ENCODE measurements at regions of chr10 and their contacts with region 1.

Region 1: DNA sequence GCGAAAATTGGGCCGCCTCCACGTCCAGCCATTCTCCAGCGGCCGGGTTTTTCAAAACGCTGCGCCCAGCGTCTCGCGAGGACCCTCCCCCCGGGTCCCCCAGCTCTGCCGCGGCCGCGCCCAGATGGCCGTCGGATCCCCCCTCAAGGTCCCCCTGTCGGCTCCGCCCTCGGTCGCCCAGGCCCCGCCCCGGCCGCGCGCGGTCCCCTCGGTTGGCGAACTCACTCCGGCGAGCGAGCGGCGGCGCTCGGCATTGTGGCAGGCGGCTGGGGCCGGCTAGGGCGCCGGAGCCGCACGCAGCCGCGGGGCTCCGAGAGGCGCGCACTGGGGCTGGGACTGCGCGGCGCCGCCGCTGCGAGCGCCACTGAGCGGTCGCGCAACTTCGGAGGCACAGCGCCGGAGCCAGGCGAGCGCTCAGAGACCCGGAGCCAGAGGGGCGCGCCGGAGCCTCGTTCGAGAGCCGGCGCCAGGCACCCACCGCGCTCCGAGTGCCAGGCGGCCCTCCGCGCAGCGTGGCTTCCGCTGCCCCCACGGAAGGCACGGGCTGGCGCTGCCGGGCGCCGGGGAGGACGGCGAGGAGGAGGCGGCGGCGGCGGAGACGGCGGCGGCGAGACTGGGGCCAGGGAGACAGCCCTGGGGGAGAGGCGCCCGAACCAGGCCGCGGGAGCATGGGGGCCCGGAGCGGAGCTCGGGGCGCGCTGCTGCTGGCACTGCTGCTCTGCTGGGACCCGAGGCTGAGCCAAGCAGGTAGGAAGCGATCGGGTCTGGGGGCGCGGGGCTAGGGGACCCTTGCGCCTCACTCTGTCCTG is at the start of gene UNC5B:
- DNase-seq: peak; percentile 71 to 92
- H3K4me3 ChIP-seq: peak within 1 kb of the TSS; percentile 95
- H3K27ac ChIP-seq: no peak within 1 kb of the TSS
- H3K4me1 ChIP-seq: peaks cover 24% of the 10 kb centered on the region
- H3K27me3 ChIP-seq: peaks cover 28% of the 10 kb centered on the region
- CTCF ChIP-seq: no peak
- total RNA-seq, gene UNC5B: 1.7 and 2.7 TPM in 2 replicates

Region 2: DNA sequence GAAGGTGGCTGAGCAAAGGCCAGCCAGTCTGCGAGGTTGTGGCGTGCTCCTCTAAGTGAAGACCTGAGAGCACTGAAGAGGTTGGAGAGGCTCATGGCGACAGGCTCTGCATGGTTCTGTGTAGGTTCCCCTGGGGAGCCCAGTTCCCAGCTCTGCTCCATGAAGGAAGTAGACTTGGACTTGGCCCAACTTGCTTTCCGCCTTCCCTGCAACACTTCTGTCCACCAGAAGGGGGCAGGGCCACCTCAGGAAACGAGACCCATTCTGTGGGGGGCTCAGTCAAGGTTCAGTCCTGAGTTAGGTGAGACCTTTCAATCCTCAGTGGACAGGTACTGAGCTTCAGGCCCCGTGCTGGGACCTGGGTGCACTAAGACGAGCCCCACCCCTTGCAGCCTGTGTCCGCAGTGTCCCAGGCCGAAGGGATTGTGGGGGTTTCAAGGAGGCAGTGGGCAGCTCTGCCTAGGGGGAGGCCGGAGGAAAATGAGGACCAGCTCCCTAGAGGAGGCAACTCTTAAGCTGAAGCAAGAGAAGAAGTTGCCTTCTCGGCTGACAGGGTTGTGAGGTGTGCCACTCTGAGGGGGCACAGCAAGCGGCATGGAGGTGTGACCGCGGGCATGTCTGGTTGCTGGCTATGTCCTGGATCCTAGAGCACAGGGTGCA is 309.1 kb before region 1 on chr10:
- CTCF ChIA-PET with region 1: interaction called, 4 read pairs
- POLR2A ChIA-PET with region 1: interaction called, 3 read pairs
- intact Hi-C with region 1: loop called (anchors 5 kb)
- DNase-seq: peak in 1 of 2 experiments; percentile 55
- H3K4me3 ChIP-seq: no peak overlapping the region
- H3K27ac ChIP-seq: no peak overlapping the region
- H3K4me1 ChIP-seq: 0 out of 2 replicates have a peak, but pooled peaks cover 5% of the 10 kb centered on the region
- H3K27me3 ChIP-seq: peaks cover 28% of the 10 kb centered on the region; the same call in 1 of the 2 replicates
- CTCF ChIP-seq: peak; percentile 99

Region 3: GRCh38 chr10:70925377-70926225 is 286.9 kb before region 1 on chr10:
- CTCF ChIA-PET with region 1: interaction called, 12 read pairs
- POLR2A ChIA-PET with region 1: no interaction called
- intact Hi-C with region 1: loop called (anchors 1 kb)
- DNase-seq: peak in 1 of 2 experiments; percentile 53
- H3K4me3 ChIP-seq: no peak overlapping the region
- H3K27ac ChIP-seq: no peak overlapping the region
- H3K4me1 ChIP-seq: peaks cover 23% of the 10 kb centered on the region
- H3K27me3 ChIP-seq: no peaks in the 10 kb centered on the region
- CTCF ChIP-seq: peak; percentile 98

Region 4: DNA sequence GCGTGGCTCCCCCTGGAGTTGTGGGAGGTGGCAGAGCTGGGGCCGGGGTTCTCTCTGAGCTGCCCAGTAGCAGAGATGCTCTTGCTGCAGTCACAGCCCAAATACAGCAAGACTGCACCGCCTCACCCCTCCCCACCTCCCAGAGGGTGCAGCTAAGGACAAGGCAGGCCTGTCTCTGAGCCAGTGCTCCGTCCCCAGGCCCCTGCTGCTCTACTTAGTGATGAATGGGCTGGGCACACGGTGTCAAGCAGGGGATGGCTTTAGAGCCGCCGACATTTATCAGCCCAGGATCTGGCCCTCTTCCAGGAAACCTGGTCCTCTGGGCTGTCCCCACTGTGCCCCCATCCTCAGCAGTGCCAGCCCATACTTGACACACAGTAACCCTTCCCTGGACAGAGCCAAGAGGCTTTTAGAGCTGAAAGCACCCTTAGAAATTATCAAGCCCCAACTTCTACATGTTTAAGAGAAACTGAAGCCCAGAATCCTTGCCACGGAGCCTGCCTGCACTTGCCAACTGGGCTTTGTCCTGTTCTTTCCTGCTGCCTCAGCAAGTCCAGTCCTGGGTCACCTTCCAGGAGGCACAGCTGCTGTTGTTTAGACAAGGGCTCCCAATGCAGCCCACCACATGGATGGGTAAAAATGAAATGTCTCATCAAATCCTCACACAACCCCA is 137.3 kb before region 1 on chr10:
- CTCF ChIA-PET with region 1: no interaction called
- POLR2A ChIA-PET with region 1: no interaction called
- intact Hi-C with region 1: loop called (anchors 10 kb)
- DNase-seq: no peak
- H3K4me3 ChIP-seq: no peak overlapping the region
- H3K27ac ChIP-seq: no peak overlapping the region
- H3K4me1 ChIP-seq: peaks cover 18% of the 10 kb centered on the region
- H3K27me3 ChIP-seq: peaks cover 69% of the 10 kb centered on the region
- CTCF ChIP-seq: no peak

Region 5: GRCh38 chr10:71138166-71138830 is 74.2 kb before region 1 on chr10:
- CTCF ChIA-PET with region 1: no interaction called
- POLR2A ChIA-PET with region 1: no interaction called
- intact Hi-C with region 1: no loop called
- DNase-seq: no peak
- H3K4me3 ChIP-seq: no peak overlapping the region
- H3K27ac ChIP-seq: no peak overlapping the region
- H3K4me1 ChIP-seq: no peaks in the 10 kb centered on the region
- H3K27me3 ChIP-seq: peaks cover 67% of the 10 kb centered on the region
- CTCF ChIP-seq: no peak

Region 6: DNA sequence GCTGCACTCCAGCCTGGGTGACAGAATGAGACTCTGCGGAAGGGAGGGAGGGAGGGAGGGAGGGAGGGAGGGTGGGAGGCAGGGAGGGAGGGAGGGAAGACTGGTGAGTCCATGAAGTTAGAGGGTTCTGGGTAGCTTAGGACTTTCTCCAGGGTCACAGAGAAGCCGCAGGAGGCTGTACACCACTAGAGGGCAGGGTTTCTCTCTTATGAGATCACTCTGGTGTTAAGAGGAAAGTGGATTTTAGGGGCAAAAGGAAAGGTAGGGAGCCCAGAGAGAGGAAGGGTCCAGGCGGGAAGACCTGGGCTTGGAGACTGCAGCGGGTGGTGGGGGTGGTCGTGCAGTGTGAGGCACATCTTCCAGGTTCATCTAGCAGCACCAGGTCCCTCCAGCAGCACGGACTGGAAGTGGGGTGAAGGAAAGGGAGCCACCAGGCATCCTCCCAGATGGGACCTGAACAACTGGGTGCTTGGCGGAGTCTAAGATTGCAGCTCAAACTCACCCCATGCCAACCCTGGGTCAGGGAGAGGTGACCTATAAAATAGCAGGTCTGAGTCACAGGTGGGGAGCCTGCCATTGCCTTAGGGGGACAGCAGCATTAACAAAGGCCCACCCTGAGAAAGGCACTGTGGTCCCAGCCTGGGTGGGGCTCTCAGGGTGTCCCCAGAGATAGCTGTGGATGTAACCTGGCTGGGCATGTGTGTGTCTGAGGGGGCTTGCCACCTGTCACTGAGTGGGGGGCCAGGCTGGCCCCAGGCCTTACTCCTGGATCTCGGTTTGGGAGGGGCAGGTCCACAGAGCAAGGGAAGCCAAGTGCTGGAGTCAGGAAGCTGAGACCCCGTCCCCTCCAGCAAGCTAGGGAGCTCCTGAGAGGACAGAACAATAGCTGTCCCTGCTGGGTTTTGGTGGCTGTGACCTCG is 58.0 kb after region 1 on chr10:
- CTCF ChIA-PET with region 1: interaction called, 3 read pairs
- POLR2A ChIA-PET with region 1: interaction called, 7 read pairs
- intact Hi-C with region 1: loop called (anchors 1 kb)
- DNase-seq: peak in 1 of 2 experiments; percentile 56
- H3K4me3 ChIP-seq: no peak overlapping the region
- H3K27ac ChIP-seq: no peak overlapping the region
- H3K4me1 ChIP-seq: peaks cover 6% of the 10 kb centered on the region
- H3K27me3 ChIP-seq: no peaks in the 10 kb centered on the region
- CTCF ChIP-seq: peak; percentile 76

Region 7: DNA sequence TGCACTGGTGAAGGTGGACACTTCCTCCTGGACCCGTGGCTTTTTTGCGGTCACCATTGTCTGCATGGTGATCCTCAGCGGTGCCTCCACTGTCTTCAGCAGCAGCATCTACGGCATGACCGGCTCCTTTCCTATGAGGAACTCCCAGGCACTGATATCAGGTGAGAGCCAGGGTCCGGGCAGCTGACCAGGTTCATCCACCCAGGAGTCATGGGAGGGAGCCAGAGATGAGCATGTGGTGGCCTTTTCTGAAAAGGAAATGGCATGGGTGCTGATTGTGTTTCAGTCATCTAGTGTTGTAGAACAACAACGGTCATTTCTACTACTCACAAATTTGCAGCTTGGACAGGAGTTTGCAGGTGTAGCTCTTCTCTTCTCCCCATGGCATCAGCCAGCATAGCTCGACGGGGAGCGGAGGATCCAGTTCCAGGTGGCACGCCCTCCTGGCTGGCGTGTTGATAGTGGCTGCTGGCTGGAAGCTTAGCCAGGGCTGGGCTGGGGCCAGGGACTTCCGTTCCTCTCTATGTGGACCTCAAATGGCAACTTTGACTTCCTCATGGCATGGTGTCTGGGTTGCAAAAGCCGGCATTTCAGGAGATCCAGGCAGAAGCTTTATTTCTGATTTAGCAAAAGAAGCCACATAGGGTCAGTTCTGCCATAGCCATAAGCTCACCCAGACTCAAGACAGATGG is 139.3 kb after region 1 on chr10:
- CTCF ChIA-PET with region 1: no interaction called
- POLR2A ChIA-PET with region 1: no interaction called
- intact Hi-C with region 1: no loop called
- DNase-seq: no peak
- H3K4me3 ChIP-seq: no peak overlapping the region
- H3K27ac ChIP-seq: no peak overlapping the region
- H3K4me1 ChIP-seq: peaks cover 31% of the 10 kb centered on the region
- H3K27me3 ChIP-seq: no peaks in the 10 kb centered on the region
- CTCF ChIP-seq: no peak

Region 8: DNA sequence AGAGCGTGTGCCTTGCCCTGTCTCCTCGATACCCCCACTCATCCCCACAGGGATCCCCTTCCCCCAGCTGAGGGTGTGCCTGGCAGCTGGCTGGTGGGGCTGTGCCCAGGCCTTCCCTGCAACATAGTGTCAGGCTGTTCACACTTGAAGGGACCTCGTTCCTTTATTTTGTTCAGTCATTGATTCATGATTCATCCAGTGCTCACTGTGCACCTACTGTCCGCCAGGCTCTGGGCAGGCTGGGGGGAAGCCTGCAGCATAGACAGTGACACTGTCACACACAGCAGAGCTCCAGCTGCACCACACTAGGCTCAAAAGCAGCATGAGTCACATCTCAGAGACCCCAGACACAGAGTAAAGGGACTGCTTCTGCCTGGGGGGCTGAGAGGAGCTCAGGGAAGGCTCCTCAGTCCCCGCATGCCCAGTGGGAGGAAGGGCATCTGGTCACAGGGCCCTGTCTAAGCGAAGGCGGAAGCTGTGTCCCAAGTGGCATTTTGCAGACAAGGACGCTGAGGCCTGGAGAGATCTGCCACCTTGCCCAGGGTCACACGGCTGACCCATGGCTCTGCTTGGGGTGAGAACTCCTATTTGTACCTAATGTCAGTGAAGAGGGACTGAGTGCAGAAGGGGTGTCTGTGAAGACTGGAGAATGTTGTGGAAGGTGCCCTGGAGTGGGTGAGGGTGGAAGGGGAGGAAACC is 212.1 kb after region 1 on chr10:
- CTCF ChIA-PET with region 1: no interaction called
- POLR2A ChIA-PET with region 1: no interaction called
- intact Hi-C with region 1: no loop called
- DNase-seq: no peak
- H3K4me3 ChIP-seq: no peak overlapping the region
- H3K27ac ChIP-seq: no peak overlapping the region
- H3K4me1 ChIP-seq: no peaks in the 10 kb centered on the region
- H3K27me3 ChIP-seq: no peaks in the 10 kb centered on the region
- CTCF ChIP-seq: no peak

Region 9: GRCh38 chr10:71462062-71462935 is 249.8 kb after region 1 on chr10:
- CTCF ChIA-PET with region 1: no interaction called
- POLR2A ChIA-PET with region 1: no interaction called
- intact Hi-C with region 1: no loop called
- DNase-seq: no peak
- H3K4me3 ChIP-seq: no peak overlapping the region
- H3K27ac ChIP-seq: no peak overlapping the region
- H3K4me1 ChIP-seq: no peaks in the 10 kb centered on the region
- H3K27me3 ChIP-seq: no peaks in the 10 kb centered on the region
- CTCF ChIP-seq: no peak

Region 10: DNA sequence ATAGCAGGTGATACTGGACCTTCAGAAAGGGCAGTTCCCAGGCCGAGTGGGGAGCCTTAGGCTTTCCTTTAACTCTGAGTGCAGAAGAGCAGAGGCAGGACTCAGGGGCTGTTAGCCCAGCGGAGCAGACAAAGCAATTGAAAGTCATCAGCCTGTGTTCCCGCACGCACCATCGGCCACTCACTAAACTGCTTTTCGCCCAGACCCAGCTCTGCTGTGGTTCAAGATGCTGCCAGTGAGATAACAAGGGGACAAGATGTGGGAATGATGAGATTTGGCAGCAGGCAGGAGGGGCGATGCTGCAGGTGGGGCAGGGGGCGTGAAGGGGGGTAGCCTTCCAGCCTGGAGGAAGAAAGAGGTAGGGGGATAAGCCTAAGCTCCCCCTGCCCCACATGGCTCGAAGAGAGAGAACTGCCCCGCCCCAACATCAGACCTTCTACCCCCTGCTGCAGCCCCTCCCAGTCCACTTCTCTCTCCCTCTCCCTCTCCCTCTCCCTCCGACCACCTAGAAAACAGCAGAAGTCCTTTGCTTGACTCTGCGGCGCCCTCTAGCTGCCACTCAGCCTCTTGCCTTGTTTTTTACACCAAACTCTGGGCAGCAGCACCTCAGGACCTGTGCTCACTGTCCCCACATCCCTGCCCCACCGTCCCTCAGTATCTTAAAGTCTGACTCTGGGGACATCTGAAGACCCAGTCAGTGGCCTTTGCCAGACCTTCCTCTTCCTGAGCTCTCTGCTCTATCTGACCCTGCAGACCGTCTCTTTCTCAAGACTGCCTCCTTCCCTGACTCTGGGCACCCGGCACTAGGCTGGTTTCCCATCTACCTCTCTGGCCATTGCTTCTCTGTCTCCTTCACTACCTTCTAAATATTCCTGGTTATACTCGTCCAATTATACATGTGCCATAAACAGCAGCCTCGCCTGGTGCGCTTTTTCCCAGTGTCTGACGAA is 396.6 kb after region 1 on chr10:
- CTCF ChIA-PET with region 1: interaction called, 16 read pairs
- POLR2A ChIA-PET with region 1: no interaction called
- intact Hi-C with region 1: no loop called
- DNase-seq: peak; percentile 48 to 69
- H3K4me3 ChIP-seq: no peak overlapping the region
- H3K27ac ChIP-seq: no peak overlapping the region
- H3K4me1 ChIP-seq: peaks cover 60% of the 10 kb centered on the region
- H3K27me3 ChIP-seq: no peaks in the 10 kb centered on the region
- CTCF ChIP-seq: peak; percentile 92